IMR-90 (cell line): ENCODE measurements at regions of chr2 and their contacts with region 1.

Region 1: GRCh38 chr2:119862127-119862889 is 102.6 kb downstream of the PTPN4 start:
- DNase-seq: no peak
- ATAC-seq: no peak
- H3K4me3 ChIP-seq: no peak overlapping the region
- H3K27ac ChIP-seq: no peak overlapping the region
- H3K4me1 ChIP-seq: peaks cover 2% of the 10 kb centered on the region; the same call in 1 of the 2 replicates
- H3K27me3 ChIP-seq: no peaks in the 10 kb centered on the region
- CTCF ChIP-seq: no peak
- POLR2A ChIP-seq: no peak
- RAD21 ChIP-seq: no peak

Region 2: DNA sequence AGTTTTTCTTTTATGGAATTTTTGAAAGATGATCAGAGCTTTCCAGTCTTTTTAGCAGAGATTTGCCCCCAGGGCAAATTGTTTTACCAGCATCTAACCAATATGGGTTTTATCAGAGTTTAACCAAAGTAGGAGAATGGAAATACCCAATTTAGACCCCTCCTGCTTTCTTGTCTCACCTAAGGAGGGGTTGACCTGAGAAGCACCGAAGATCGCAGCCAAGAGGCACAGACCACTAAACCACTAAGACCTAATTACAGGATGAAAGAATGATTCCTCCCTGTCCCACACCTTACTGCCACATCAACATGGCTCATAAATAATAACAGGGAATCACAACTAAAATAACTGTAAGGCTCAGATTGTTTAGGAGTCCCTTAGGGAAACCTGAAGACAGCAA is 38.7 kb after region 1 on chr2:
- CTCF ChIA-PET with region 1: no interaction called
- POLR2A ChIA-PET with region 1: no interaction called
- dilution Hi-C with region 1: no loop called
- in situ Hi-C with region 1: no loop called
- intact Hi-C with region 1: loop called (anchors 5 kb)
- DNase-seq: no peak
- ATAC-seq: no peak
- H3K4me3 ChIP-seq: no peak overlapping the region
- H3K27ac ChIP-seq: no peak overlapping the region
- H3K4me1 ChIP-seq: no peaks in the 10 kb centered on the region
- H3K27me3 ChIP-seq: no peaks in the 10 kb centered on the region
- CTCF ChIP-seq: no peak
- POLR2A ChIP-seq: no peak
- RAD21 ChIP-seq: no peak

Region 3: DNA sequence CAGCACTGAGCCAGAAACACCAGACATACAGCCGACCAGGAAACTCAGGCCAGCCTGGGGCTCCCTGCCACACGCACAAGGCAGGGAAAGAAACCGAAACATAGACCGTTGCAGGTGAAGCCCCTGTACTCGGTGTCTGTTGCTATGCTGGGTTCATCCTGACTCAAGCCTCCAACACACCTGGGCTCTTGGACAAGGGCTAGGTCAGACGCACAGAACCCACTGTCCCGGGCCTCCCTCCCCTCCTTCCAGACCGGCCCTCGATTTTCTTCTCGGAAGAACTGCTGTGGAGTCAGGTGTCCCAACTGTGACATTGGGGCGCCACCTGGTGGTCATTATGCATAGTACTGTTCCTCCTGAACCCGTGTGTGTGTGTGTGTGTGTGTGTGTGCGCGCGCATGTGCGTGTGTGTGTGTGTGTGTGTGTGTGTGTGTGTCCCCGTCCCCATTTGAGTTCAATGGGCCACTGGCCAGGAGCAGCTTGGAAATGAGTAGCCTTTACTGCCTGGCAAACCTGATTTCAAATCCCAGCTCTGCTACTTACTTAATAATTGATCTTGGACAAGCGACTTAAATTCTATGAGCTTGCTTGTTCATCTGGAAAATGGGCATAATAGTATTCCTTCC is 817.9 kb after region 1 on chr2:
- CTCF ChIA-PET with region 1: no interaction called
- POLR2A ChIA-PET with region 1: no interaction called
- dilution Hi-C with region 1: no loop called
- in situ Hi-C with region 1: no loop called
- intact Hi-C with region 1: no loop called
- DNase-seq: peak; percentile 88
- ATAC-seq: peak; percentile 67
- H3K4me3 ChIP-seq: no peak overlapping the region
- H3K27ac ChIP-seq: no peak overlapping the region
- H3K4me1 ChIP-seq: peaks cover 18% of the 10 kb centered on the region
- H3K27me3 ChIP-seq: peaks cover 12% of the 10 kb centered on the region
- CTCF ChIP-seq: peak; percentile 78
- POLR2A ChIP-seq: peak; percentile 40; the same call in 1 of the 2 replicates
- RAD21 ChIP-seq: peak; percentile 92